Heart right ventricle (tissue), 16 donors: ENCODE measurements at regions of chr4 and their contacts with region 1.

Region 1: DNA sequence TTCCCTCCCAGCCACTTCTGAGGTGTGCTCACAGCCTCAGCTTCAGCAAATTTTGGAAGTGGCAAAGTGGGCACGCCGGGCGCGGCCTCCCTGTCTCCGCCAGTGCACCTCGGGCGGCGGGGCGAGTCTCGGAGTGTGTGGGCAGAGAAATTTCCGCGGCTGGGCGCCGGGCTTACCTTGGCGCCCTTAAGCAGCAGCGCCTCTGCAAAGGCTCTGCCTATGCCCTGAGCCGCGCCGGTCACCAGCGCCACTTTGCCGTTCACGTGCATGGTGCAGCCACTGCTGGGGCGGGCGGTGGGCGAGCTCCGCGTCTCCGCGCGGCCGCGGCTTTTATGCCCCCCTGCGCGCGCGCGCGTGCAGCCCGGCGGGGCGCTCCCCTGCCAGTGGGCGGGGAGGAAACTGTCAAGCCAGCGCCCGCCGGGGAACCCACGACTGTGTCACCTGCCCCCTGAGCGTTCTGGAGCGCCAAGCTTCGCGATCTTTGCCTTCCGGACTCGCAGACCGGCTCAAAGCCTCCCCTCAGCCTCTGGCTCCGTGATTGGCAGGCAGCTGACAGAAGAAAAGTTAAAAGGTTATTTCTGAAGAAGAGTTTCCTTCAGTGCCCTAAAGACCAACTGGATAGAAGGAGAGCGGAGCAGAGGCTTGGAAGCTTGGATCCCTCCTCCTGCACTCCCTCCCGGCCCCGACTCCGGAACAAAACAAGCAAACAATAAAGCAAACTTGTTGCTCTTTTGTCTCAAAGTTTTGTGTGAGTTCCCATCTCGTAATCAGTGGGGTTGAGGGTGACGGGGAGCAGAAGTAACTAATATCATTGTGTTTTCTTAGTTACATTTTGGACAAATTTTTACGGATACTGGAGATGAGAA is at the start of gene HPGD:
- DNase-seq: peak; percentile 32 to 37
- ATAC-seq: peak; percentile 79 to 88 (median 82)
- H3K4me3 ChIP-seq: peak within 1 kb of the TSS; percentile 18 to 69 (median 60)
- H3K27ac ChIP-seq: peak within 1 kb of the TSS in 3 of 10 donors; percentile 2 to 37 (median 29)
- H3K4me1 ChIP-seq: peaks cover 0 to 46% (median 5%) of the 10 kb centered on the region in 9 donors
- H3K27me3 ChIP-seq: peaks cover 0 to 51% (median 20%) of the 10 kb centered on the region in 7 donors
- CTCF ChIP-seq: no peak
- total RNA-seq, gene HPGD: 0.47 to 2.5 (median 1.5) TPM

Region 2: DNA sequence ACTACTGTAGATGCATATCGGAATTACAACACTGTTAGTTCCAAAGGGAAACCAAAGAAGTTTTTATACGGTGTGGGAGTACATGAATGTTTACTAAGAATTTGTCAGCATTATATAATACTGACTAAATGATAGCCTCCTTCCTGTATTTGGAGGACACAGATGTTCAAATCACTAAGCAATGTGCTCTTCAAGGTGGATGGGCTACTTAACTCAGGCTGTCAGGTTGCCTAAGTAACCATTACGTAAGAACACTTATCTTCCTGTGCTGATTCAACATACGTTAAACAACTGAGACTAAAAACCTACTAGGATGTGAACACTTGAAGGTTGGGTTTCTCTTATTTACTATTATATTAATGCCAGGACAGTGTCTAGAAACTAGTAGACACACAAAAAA is 81.8 kb after region 1 on chr4:
- intact Hi-C with region 1: loop called in 1 of 10 experiments (anchors 10 kb)
- DNase-seq: no peak
- ATAC-seq: peak in 1 of 8 donors; percentile 16
- H3K4me3 ChIP-seq: no peak overlapping the region
- H3K27ac ChIP-seq: no peak overlapping the region
- H3K4me1 ChIP-seq: no peaks in the 10 kb centered on the region
- H3K27me3 ChIP-seq: no peaks in the 10 kb centered on the region
- CTCF ChIP-seq: no peak

Region 3: GRCh38 chr4:174613979-174614378 is 91.6 kb after region 1 on chr4:
- intact Hi-C with region 1: loop called in 2 of 10 experiments (anchors 5 to 10 kb)
- DNase-seq: no peak
- ATAC-seq: no peak
- H3K4me3 ChIP-seq: no peak overlapping the region
- H3K27ac ChIP-seq: peak overlapping the region in 1 of 10 donors; percentile 70
- H3K4me1 ChIP-seq: peaks cover 0 to 34% (median 0%) of the 10 kb centered on the region in 9 donors
- H3K27me3 ChIP-seq: no peaks in the 10 kb centered on the region
- CTCF ChIP-seq: no peak